MCF 10A (cell line): ENCODE measurements at regions of chr7 and their contacts with region 1.

Region 1: GRCh38 chr7:141975806-141976523 is 2.4 kb upstream of the TAS2R38 start:
- DNase-seq: peak; percentile 85
- H3K4me3 Mint-ChIP-seq: peak overlapping the region; percentile 60
- H3K27ac Mint-ChIP-seq: peak overlapping the region; percentile 9
- H3K4me1 Mint-ChIP-seq: no peaks in the 10 kb centered on the region
- H3K27me3 Mint-ChIP-seq: no peaks in the 10 kb centered on the region
- CTCF ChIP-seq: peak; percentile 92

Region 2: DNA sequence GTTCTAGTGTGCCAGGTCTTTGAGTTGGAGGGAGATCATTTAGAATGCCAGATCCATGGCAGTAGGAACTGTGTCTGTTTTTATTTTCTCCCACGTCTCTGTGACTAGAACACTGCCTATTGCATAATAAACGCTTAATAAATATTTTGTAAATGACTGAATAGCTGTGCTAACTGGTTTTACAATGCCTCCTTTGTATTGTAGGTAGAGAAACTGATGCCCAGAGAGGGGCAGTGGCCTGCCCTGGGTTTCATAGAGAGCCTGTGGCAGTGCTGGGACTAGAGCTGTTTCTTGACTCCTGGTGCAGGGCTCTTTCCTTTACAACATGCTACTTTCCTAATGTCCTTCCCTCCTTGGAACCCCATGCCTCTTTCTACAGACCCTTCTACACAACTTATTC is 183.4 kb before region 1 on chr7:
- CTCF ChIA-PET with region 1: no interaction called
- POLR2A ChIA-PET with region 1: no interaction called
- intact Hi-C with region 1: no loop called
- DNase-seq: no peak
- H3K4me3 Mint-ChIP-seq: no peak overlapping the region
- H3K27ac Mint-ChIP-seq: no peak overlapping the region
- H3K4me1 Mint-ChIP-seq: no peaks in the 10 kb centered on the region
- H3K27me3 Mint-ChIP-seq: no peaks in the 10 kb centered on the region
- CTCF ChIP-seq: no peak

Region 3: DNA sequence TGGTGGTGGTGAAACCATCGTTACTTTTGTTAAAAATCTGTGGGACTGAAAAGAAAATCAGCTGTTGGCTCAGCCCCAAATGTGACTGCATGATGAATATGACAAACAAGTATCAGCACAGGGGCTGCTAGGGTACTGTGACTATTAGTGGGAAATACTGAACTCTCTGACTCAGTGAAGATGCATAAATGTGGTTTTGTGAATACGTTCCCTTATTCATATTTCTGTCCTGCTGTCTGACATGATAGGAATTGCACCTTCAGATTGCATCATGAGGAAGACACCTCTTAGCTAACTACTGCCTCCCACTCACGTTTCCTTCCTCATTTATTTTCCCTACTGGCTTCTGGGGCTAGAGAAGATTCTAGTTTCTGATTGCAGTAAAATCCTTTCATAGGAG is 30.6 kb before region 1 on chr7:
- CTCF ChIA-PET with region 1: interaction called, 13 read pairs
- POLR2A ChIA-PET with region 1: no interaction called
- intact Hi-C with region 1: no loop called
- DNase-seq: peak; percentile 50
- H3K4me3 Mint-ChIP-seq: no peak overlapping the region
- H3K27ac Mint-ChIP-seq: no peak overlapping the region
- H3K4me1 Mint-ChIP-seq: no peaks in the 10 kb centered on the region
- H3K27me3 Mint-ChIP-seq: no peaks in the 10 kb centered on the region
- CTCF ChIP-seq: no peak

Region 4: GRCh38 chr7:142001163-142001874 is 25.4 kb after region 1 on chr7:
- CTCF ChIA-PET with region 1: interaction called, 22 read pairs
- POLR2A ChIA-PET with region 1: no interaction called
- intact Hi-C with region 1: no loop called
- DNase-seq: peak; percentile 29
- H3K4me3 Mint-ChIP-seq: no peak overlapping the region
- H3K27ac Mint-ChIP-seq: no peak overlapping the region
- H3K4me1 Mint-ChIP-seq: peaks cover 7% of the 10 kb centered on the region
- H3K27me3 Mint-ChIP-seq: no peaks in the 10 kb centered on the region
- CTCF ChIP-seq: no peak

Region 5: GRCh38 chr7:142024547-142024946 is 48.6 kb after region 1 on chr7:
- CTCF ChIA-PET with region 1: interaction called, 108 read pairs
- POLR2A ChIA-PET with region 1: interaction called, 10 read pairs
- intact Hi-C with region 1: loop called (anchors 1 kb)
- DNase-seq: peak; percentile 13
- H3K4me3 Mint-ChIP-seq: no peak overlapping the region
- H3K27ac Mint-ChIP-seq: no peak overlapping the region
- H3K4me1 Mint-ChIP-seq: peaks cover 21% of the 10 kb centered on the region
- H3K27me3 Mint-ChIP-seq: no peaks in the 10 kb centered on the region
- CTCF ChIP-seq: no peak

Region 6: GRCh38 chr7:142153400-142153799 is 177.4 kb after region 1 on chr7:
- CTCF ChIA-PET with region 1: interaction called, 46 read pairs
- POLR2A ChIA-PET with region 1: no interaction called
- intact Hi-C with region 1: no loop called
- DNase-seq: peak; percentile 43
- H3K4me3 Mint-ChIP-seq: no peak overlapping the region
- H3K27ac Mint-ChIP-seq: no peak overlapping the region
- H3K4me1 Mint-ChIP-seq: no peaks in the 10 kb centered on the region
- H3K27me3 Mint-ChIP-seq: no peaks in the 10 kb centered on the region
- CTCF ChIP-seq: no peak

Region 7: DNA sequence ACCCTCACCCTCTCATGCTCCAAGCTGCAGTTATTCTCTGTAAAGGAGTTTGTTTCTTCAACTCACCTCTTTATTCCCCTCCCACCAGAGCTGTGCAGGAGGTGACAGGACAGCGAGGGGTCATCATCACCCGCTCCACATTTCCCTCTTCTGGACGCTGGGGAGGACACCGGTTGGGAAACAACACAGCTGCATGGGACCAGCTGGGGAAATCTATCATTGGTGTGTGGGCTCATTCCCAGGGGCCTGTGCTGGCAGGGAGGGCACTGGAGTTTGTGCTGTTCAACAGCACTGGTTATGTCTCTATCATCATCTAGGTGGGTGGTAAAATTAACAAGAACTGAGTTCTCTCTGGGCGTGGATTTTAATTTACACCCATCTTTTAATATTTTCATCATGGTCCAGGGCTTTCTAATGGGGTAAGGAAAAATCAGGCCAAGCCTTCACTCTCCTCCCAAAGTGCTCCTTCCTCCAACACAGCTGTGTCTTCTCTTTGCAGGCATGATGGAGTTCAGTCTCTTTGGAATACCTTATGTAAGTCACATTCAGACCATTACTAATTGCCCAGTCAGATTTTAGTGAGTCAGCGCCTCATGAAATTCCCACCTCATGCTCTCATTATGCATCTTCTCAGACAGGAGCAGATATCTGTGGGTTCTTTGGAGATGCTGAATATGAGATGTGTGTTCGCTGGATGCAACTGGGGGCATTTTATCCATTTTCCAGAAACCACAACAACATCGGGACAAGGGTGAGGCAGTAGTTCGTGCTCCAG is 220.3 kb after region 1 on chr7:
- CTCF ChIA-PET with region 1: interaction called, 72 read pairs
- POLR2A ChIA-PET with region 1: no interaction called
- intact Hi-C with region 1: no loop called
- DNase-seq: peak; percentile 26
- H3K4me3 Mint-ChIP-seq: no peak overlapping the region
- H3K27ac Mint-ChIP-seq: no peak overlapping the region
- H3K4me1 Mint-ChIP-seq: no peaks in the 10 kb centered on the region
- H3K27me3 Mint-ChIP-seq: peaks cover 40% of the 10 kb centered on the region
- CTCF ChIP-seq: no peak

Region 8: DNA sequence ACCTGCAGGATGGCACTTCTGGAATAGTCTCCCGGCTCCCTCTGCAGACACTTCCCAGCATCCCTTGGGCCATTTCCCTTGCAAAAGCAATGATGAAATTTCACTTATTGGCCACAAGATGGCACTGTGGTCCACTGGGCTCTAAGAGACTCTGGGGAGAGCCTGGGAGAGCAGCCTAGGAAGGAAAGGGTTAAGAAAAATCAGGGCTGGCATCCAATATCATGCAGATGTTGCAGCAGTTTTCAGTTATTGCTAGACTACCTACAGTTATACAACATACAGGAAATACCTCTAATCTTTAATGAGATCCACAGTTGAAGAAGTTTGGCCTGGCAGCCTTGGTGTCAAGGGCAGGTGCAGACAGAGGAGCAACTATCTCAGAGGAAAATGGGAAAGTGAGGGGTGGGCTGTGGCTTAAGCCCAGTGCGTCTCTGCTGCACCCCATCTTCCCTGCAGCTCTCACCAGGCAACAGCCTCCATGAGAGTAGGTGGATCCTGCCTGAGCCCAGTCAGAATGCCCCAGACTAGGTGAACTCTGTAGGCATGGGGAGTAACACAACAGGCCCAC is 382.1 kb after region 1 on chr7:
- CTCF ChIA-PET with region 1: interaction called, 9 read pairs
- POLR2A ChIA-PET with region 1: no interaction called
- intact Hi-C with region 1: loop called (anchors 5 kb)
- DNase-seq: peak; percentile 87
- H3K4me3 Mint-ChIP-seq: peak overlapping the region; percentile 38
- H3K27ac Mint-ChIP-seq: no peak overlapping the region
- H3K4me1 Mint-ChIP-seq: no peaks in the 10 kb centered on the region
- H3K27me3 Mint-ChIP-seq: peaks cover 28% of the 10 kb centered on the region
- CTCF ChIP-seq: peak; percentile 92